Pancreas (tissue), 10 donors: ENCODE measurements at regions of chr6 and their contacts with region 1.

Region 1: DNA sequence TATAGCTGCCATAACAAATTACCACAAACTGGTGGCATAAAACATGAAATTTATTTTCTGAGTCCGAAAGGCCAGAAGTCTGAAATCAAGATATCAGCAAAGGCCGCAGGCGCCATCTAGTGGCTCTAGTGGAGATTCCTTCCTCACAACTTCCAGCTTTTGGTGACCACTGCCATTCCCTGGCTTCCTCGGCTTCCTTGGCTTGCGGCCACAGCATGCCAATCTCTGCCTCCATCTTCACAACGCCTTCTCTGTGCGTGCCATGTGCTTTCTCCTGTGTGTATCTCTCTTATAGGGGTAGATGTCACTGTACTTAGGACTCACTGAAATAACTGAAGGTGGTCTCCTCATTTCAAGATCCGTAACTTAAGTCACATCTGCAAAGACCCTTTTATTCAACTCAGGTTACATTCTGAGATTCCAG is 5.4 kb upstream of the PLAGL1 start:
- DNase-seq: peak; percentile 51 to 83 (median 76)
- ATAC-seq: peak; percentile 72 to 91 (median 87)
- H3K4me3 ChIP-seq: no peak overlapping the region
- H3K27ac ChIP-seq: no peak overlapping the region
- H3K4me1 ChIP-seq: no peaks in the 10 kb centered on the region
- H3K27me3 ChIP-seq: no peaks in the 10 kb centered on the region
- CTCF ChIP-seq: peak; percentile 69 to 89 (median 84)

Region 2: DNA sequence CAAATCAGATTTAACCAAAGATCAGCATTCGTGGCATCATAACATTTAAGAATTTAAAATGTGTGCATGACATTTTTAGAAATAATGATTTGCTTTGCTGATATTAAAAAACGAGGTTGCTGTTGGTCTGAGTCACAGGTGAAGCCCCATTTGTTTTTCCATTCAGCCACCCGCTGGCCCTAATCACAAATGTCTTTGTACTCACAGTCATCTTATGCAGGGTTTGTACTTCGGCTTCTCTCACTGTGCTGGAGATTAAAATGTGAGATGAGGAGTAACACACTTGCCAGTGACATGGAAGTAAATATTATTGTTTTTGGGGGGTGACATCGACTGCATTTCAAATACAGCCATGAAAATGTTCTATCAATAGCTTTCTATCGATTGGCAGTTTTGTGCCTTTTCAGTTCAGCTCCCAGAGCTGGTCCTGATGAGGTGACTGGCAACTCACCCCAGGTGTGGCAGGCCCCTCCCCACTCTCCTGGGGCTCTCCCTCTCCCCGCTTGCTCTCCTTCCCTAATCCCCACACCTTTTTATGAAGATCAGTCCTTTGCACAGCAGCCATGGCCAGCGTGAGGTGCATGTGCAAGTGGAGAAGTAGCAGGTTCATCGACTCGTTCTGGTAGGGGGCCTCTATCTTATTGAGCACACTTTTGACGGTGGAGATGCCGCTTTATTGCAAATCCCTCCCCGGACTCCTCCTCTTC is 443.2 kb before region 1 on chr6:
- intact Hi-C with region 1: loop called in 2 of 3 experiments (anchors 5 to 10 kb)
- DNase-seq: no peak
- ATAC-seq: no peak
- H3K4me3 ChIP-seq: no peak overlapping the region
- H3K27ac ChIP-seq: no peak overlapping the region
- H3K4me1 ChIP-seq: no peaks in the 10 kb centered on the region
- H3K27me3 ChIP-seq: no peaks in the 10 kb centered on the region
- CTCF ChIP-seq: no peak

Region 3: GRCh38 chr6:143575440-143575839 is 438.1 kb before region 1 on chr6:
- intact Hi-C with region 1: loop called in 2 of 3 experiments (anchors 5 to 10 kb)
- DNase-seq: peak in 3 of 6 donors; percentile 30 to 64 (median 36)
- ATAC-seq: peak; percentile 77 to 99 (median 96)
- H3K4me3 ChIP-seq: no peak overlapping the region
- H3K27ac ChIP-seq: no peak overlapping the region
- H3K4me1 ChIP-seq: no peaks in the 10 kb centered on the region
- H3K27me3 ChIP-seq: no peaks in the 10 kb centered on the region
- CTCF ChIP-seq: peak; percentile 49 to 80 (median 76)